ENCODE measurements at regions of chr10 and their contacts with region 1.

Region 1: DNA sequence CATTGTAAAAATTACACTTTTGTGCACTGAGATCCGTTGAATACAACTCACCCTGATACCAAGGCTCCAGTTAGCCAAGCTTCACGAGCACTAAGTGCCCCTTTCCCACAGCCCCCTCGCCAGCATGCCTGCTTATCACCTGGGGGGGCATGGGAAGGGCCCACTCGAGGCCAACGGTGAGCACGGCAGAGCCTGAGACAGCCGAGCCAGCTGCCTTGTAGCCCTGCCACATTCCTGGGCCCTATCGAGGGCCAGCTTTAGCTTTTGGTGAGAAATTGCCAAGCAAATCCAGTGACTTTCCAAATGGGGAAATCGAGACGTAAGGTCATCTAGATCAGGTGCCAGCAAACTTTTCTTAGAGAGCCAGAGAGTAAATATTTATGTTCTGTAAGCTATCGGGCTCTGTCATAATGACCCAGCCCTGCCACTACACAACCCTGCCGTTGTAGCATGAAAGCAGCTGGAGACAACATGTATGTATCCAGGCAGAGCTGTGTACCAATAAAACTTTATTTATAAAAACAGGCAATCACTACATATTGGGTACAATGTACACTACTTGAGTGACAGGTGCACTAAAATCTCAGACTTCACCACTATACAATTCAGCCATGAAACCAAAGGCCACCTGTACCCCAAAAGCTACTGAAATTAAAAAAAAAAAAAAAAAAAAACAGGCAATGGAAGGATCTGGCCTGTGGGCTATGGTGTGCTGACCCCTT is 83.6 kb downstream of the FAM53B start:
- DNase-seq: no peak
- H3K4me3 ChIP-seq: no peak overlapping the region
- CTCF ChIP-seq: no peak

Region 2: DNA sequence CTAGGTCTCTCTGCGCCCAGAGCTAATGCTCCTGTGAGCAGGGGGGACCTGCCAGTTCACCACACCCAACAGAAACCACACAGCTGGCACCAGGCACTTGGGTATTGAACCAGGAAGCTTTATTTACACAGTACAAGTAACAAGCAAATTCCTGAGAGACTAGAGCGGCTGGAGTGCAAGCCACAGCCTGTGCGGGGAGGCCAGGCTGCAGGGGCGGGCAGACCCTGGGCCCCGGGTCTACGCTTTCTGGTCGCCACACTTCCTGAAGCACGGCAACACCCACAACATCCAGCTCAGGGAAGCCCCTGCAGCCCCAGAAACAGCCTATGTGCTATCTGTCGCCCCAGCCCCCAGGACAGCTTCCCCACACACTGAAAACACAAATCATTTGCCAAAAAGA is 41.4 kb before region 1 on chr10:
- in situ Hi-C with region 1: loop called (anchors 5 kb)
- DNase-seq: no peak
- H3K4me3 ChIP-seq: no peak overlapping the region
- CTCF ChIP-seq: no peak

Region 3: GRCh38 chr10:124728071-124728829 is 67.7 kb after region 1 on chr10:
- in situ Hi-C with region 1: loop called (anchors 5 kb)
- DNase-seq: no peak
- H3K4me3 ChIP-seq: no peak overlapping the region
- CTCF ChIP-seq: no peak

Measured in astrocyte of the cerebellum (primary cell).